Heart left ventricle (tissue), 16 donors: ENCODE measurements at regions of chr12 and their contacts with region 1.

Region 1: DNA sequence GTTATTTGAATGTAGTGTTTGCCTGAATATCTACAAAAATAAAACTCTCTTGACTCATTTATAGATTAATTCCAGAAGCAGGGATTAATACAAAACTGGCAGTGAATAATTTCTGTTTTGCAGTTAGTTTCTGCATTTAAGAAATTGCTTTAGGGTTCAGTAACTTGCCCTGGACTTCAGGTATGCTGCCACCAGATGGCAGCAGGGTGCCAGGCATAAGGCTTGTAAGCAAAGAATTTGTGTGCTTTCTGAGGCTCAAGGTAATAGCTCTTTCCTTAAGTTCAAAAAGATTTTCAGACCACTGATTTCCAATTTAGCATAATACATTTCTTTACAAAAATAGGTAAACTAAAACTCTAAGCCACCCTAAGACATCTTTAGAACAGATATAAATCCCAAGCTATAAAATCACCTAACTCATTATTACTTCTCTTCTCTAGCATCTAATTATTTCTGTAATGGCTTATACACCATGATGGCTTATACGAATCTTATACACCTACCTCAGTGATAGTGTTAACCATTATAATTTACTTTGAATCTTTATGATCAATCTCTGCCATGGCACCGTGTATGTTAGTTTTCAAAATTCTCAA is 398.3 kb downstream of the APAF1 start:
- DNase-seq: peak; percentile 32 to 72 (median 43)
- ATAC-seq: no peak
- H3K4me3 ChIP-seq: no peak overlapping the region
- H3K27ac ChIP-seq: no peak overlapping the region
- H3K4me1 ChIP-seq: no peaks in the 10 kb centered on the region
- H3K27me3 ChIP-seq: no peaks in the 10 kb centered on the region
- CTCF ChIP-seq: peak; percentile 73 to 92 (median 83)
- POLR2A ChIP-seq: no peak

Region 2: GRCh38 chr12:99020871-99021270 is 22.5 kb before region 1 on chr12:
- intact Hi-C with region 1: no loop called
- DNase-seq: no peak
- ATAC-seq: no peak
- H3K4me3 ChIP-seq: no peak overlapping the region
- H3K27ac ChIP-seq: no peak overlapping the region
- H3K4me1 ChIP-seq: no peaks in the 10 kb centered on the region
- H3K27me3 ChIP-seq: no peaks in the 10 kb centered on the region
- CTCF ChIP-seq: no peak
- POLR2A ChIP-seq: no peak

Region 3: GRCh38 chr12:99170037-99170436 is 126.6 kb after region 1 on chr12:
- intact Hi-C with region 1: loop called in 1 of 10 experiments (anchors 10 kb)
- DNase-seq: no peak
- ATAC-seq: no peak
- H3K4me3 ChIP-seq: no peak overlapping the region
- H3K27ac ChIP-seq: no peak overlapping the region
- H3K4me1 ChIP-seq: no peaks in the 10 kb centered on the region
- H3K27me3 ChIP-seq: no peaks in the 10 kb centered on the region
- CTCF ChIP-seq: no peak
- POLR2A ChIP-seq: no peak

Region 4: GRCh38 chr12:99619389-99620158 is 576.2 kb after region 1 on chr12:
- intact Hi-C with region 1: loop called in 1 of 10 experiments (anchors 10 kb)
- DNase-seq: no peak
- ATAC-seq: no peak
- H3K4me3 ChIP-seq: no peak overlapping the region
- H3K27ac ChIP-seq: no peak overlapping the region
- H3K4me1 ChIP-seq: no peaks in the 10 kb centered on the region
- H3K27me3 ChIP-seq: no peaks in the 10 kb centered on the region
- CTCF ChIP-seq: peak in 6 of 12 donors; percentile 11 to 45 (median 31)
- POLR2A ChIP-seq: no peak

Region 5: DNA sequence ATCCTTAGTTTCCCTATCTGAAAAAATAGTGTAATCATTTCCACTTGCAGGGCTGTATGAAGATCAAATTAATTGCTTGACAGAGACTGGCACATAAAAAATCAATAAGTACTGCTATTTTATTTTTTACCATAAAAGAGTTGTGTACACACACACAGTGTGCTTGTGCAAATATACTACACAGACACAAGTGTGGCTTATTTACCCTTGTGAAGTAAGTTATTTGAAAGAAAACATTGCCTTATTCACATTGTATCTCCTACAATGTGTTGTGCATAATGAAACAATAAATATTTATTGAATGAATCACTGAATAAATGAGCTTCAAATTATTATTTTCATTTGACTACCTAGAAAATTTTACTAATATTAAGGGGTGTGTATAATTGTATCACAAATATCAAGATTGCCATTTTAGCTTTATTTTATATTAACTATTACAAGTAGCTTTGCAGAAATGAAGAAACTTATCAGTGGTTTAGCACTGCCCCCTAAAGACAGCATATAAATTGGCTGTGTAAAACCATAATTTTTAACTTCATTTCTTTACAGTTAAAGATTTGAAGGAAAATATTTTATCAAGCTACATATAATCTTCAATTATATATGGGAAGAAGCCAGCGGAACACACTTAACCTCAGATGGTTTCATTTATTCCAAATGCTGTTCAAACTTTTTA is 615.4 kb after region 1 on chr12:
- intact Hi-C with region 1: loop called in 4 of 10 experiments (anchors 5 to 10 kb)
- DNase-seq: no peak
- ATAC-seq: no peak
- H3K4me3 ChIP-seq: no peak overlapping the region
- H3K27ac ChIP-seq: no peak overlapping the region
- H3K4me1 ChIP-seq: no peaks in the 10 kb centered on the region
- H3K27me3 ChIP-seq: no peaks in the 10 kb centered on the region
- CTCF ChIP-seq: peak in 5 of 12 donors; percentile 20 to 32 (median 29)
- POLR2A ChIP-seq: no peak

Region 6: GRCh38 chr12:99695050-99695449 is 651.6 kb after region 1 on chr12:
- intact Hi-C with region 1: no loop called
- DNase-seq: no peak
- ATAC-seq: no peak
- H3K4me3 ChIP-seq: no peak overlapping the region
- H3K27ac ChIP-seq: no peak overlapping the region
- H3K4me1 ChIP-seq: no peaks in the 10 kb centered on the region
- H3K27me3 ChIP-seq: no peaks in the 10 kb centered on the region
- CTCF ChIP-seq: no peak
- POLR2A ChIP-seq: no peak

Region 7: DNA sequence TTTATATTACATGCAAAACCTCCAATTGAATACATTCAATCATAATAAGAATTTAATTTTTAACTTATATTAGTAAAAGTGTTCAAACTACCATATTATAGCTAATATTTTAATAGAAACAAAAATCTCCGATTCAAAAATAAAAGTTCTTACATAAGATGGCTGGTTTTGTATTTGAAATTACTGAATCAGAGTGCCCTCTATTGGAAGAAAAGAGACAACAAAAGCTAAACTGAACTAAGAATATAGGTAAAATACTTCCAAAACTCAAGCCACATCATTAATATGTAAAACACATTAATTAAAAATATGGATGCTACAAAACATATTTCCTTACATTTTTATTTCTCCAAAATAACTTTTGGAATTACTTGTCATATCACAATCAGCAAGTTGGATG is 724.4 kb after region 1 on chr12:
- intact Hi-C with region 1: loop called in 9 of 10 experiments (anchors 5 to 10 kb)
- DNase-seq: no peak
- ATAC-seq: no peak
- H3K4me3 ChIP-seq: peak overlapping the region in 5 of 12 donors; percentile 10 to 45 (median 37)
- H3K27ac ChIP-seq: no peak overlapping the region
- H3K4me1 ChIP-seq: peaks cover 0 to 7% (median 0%) of the 10 kb centered on the region in 12 donors
- H3K27me3 ChIP-seq: no peaks in the 10 kb centered on the region
- CTCF ChIP-seq: peak in 11 of 12 donors; percentile 16 to 62 (median 38)
- POLR2A ChIP-seq: no peak